Activated CD4-positive, alpha-beta T cell treated with anti-CD3 and anti-CD28 coated beads, Interleukin-2, amount 10 ng/mL, durations not matched to agents 24 days and 14 days (primary cell): ENCODE measurements at regions of chr1 and their contacts with region 1.

Region 1: DNA sequence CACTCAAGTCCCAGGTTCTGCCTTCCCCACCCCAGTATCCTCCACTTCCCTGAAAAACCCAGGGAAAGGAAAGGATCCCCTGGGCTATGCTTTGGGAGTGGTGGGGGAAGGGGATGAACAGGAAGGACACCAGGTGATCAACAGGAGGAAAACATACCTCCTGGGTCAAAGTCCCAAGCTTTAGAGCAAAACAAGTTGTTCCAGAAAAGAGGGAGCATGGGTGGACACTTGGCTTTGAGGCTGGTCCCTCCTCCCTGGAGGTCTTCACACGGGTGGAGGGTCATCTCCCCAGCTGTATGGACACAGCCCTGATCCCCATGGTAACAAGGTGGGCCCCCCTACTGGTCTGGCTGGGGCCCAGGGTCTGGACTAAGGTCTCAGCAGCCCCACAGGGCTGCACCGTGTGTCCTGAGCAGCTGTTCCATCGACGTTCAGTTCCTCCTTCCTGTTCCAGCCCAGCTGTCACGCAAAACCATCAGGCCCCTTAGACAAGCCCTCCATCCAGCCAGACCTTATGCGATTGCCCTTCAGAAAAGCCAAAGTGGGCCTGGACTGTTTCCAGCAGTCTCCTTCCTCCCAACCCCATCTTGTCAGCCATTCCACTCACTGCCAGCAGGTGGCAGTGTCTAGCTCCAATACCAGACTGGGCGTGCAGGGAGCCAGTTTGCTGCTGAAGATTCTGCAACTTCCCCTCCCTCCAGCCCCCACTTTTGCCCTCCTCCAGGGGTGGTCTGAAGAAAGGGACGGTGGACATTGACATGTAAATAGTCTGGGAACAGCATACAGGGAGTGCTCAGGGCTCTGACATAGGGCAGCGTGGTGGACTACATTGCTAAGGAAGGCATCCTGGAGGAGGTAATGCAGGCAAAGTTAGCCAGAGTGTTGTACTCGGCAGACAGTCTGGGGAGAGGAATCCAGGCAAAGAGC is 2.9 kb upstream of the PDZK1IP1 start:
- DNase-seq: peak; percentile 91
- H3K4me3 Mint-ChIP-seq: no peak overlapping the region
- H3K27ac Mint-ChIP-seq: no peak overlapping the region
- H3K4me1 Mint-ChIP-seq: peaks cover 3% of the 10 kb centered on the region
- H3K27me3 Mint-ChIP-seq: peaks cover 5% of the 10 kb centered on the region

Region 2: GRCh38 chr1:47262787-47263413 is 70.2 kb after region 1 on chr1:
- intact Hi-C with region 1: loop called (anchors 1 kb)
- DNase-seq: peak; percentile 85
- H3K4me3 Mint-ChIP-seq: no peak overlapping the region
- H3K27ac Mint-ChIP-seq: no peak overlapping the region
- H3K4me1 Mint-ChIP-seq: peaks cover 2% of the 10 kb centered on the region
- H3K27me3 Mint-ChIP-seq: no peaks in the 10 kb centered on the region

Region 3: GRCh38 chr1:47424336-47424982 is 231.7 kb after region 1 on chr1:
- intact Hi-C with region 1: loop called (anchors 1 kb)
- DNase-seq: peak; percentile 67
- H3K4me3 Mint-ChIP-seq: no peak overlapping the region
- H3K27ac Mint-ChIP-seq: no peak overlapping the region
- H3K4me1 Mint-ChIP-seq: no peaks in the 10 kb centered on the region
- H3K27me3 Mint-ChIP-seq: peaks cover 39% of the 10 kb centered on the region